ENCODE measurements at regions of chr6 and their contacts with region 1.

Region 1: DNA sequence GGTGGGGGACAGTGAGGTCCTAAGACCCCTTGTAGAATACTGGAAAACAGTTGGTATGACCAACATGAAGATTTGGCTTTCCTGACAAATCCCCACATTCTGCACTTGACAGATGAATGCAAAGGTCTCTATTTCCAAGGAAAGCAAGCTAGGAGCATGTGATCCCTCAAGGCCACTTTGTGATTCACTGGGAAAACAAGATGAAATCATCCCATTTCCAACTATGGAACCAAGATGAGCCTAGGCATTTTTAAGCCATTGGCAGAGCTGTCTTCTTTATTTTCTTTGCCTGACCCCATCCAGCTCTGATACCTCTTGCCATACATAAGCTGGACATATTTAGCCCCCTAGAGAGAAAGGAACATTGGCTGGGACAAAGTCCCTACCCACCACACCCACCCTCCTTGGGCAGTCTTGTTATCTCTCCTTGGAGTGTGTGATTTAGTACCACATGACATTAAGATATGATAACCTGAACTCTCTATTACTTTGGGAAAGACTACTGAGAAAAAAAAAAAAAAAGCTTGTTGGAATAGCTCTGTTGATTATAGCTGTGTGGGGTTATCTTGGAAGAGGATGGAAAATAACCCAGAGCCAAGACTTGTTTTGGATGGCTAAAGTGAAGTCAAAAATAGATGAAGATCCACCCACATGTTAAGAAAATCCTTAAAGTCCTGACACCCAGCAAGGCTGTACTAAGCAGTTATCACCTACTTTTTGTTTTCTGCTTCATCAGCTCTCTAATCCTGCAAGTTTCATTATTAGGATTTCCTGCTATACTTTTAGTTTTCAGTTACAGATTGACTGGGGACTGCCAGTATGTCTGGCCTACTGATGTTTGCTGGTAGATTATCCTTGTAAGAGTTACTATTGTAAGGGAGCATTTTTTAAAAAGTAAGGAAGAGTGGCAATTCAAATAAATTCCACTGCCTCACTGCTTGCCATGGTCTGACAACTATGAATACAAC is 90.1 kb upstream of the PREP start:
- DNase-seq: no peak

Region 2: DNA sequence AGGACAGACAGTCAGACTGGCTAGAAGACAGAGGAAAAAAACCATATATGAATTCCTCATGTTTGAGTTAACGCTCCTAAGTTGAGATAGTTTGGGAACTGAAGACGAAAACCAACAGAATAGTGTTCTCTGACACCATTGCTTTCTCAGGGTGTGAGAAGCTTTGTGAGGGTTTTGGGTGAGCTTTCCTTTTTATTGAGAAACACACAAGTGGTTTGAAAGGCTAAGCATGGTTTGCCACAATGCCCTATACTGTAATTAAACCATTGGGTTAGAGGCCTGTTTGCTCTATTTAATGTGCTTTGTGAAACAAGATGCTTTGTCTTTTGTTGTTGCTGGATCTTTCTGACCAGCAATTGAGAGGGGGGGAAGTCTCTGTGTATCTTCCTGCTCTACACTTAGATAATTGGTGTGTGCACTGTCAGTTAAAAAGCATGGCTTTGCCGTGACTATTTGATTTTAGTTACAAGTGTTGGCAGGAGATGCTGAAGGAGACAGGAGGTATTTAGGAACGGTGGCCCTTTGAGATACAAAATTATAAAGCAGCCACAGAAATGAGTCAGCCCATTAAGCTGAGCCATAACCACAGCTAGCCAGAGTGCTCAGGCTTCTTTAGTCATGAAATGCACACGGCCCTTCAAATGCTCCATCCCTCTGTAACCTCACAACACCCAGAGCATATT is 182.9 kb after region 1 on chr6:
- intact Hi-C with region 1: no loop called
- DNase-seq: no peak

Region 3: GRCh38 chr6:105733565-105734162 is 240.7 kb after region 1 on chr6:
- intact Hi-C with region 1: loop called (anchors 5 kb)
- DNase-seq: no peak

Region 4: GRCh38 chr6:105992315-105992961 is 499.4 kb after region 1 on chr6:
- intact Hi-C with region 1: loop called (anchors 5 kb)
- DNase-seq: peak; percentile 95

Measured in cardiac septum (tissue), 1 donor.